Uterus (tissue), 4 donors: ENCODE measurements at regions of chr3 and their contacts with region 1.

Region 1: GRCh38 chr3:9067352-9067975 is 104.2 kb upstream of the RAD18 start:
- DNase-seq: peak; percentile 57 to 61
- H3K4me3 ChIP-seq: no peak overlapping the region
- H3K27ac ChIP-seq: peak overlapping the region in 1 of 2 donors; percentile 49
- H3K4me1 ChIP-seq: no peaks in the 10 kb centered on the region
- H3K27me3 ChIP-seq: no peaks in the 10 kb centered on the region
- CTCF ChIP-seq: peak; percentile 78 to 93 (median 83)
- POLR2A ChIP-seq: no peak

Region 2: DNA sequence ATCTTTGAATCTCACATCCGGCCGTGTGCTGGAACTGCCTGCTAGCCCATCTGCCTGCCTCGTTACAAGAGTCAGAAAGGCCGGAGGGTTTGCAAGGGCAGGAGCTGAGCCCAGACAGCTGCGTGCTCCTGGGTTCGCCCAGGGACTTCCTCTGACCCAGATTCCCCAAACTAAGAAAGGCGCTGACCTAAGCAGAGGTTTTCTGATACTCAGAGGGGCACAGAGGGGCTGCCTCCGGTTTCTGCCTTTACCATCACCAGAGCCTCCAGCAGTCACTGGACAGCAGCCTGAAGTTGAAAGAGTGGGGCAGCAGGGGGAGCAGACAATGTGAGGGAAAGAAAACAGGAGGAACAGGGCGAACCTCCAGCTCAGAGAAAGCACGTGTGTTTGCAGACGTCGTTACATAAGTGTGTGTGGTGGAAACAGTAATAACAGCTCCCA is 70.8 kb before region 1 on chr3:
- intact Hi-C with region 1: loop called (anchors 10 kb)
- DNase-seq: peak; percentile 65 to 72
- H3K4me3 ChIP-seq: no peak overlapping the region
- H3K27ac ChIP-seq: peak overlapping the region in 1 of 2 donors; percentile 31
- H3K4me1 ChIP-seq: no peaks in the 10 kb centered on the region
- H3K27me3 ChIP-seq: no peaks in the 10 kb centered on the region
- CTCF ChIP-seq: peak in 2 of 4 experiments; percentile 39 to 60
- POLR2A ChIP-seq: no peak

Region 3: GRCh38 chr3:9028134-9028533 is 39.3 kb before region 1 on chr3:
- intact Hi-C with region 1: no loop called
- DNase-seq: peak; percentile 84 to 87
- H3K4me3 ChIP-seq: no peak overlapping the region
- H3K27ac ChIP-seq: no peak overlapping the region
- H3K4me1 ChIP-seq: peaks cover 0 to 8% of the 10 kb centered on the region in 2 donors
- H3K27me3 ChIP-seq: no peaks in the 10 kb centered on the region
- CTCF ChIP-seq: no peak
- POLR2A ChIP-seq: no peak